ENCODE measurements at regions of chr15 and their contacts with region 1.

Region 1: GRCh38 chr15:85044251-85044853 is 62.7 kb downstream of the PDE8A start:
- DNase-seq: peak; percentile 32 to 93 (median 79)

Region 2: GRCh38 chr15:84748274-84749110 is 295.9 kb before region 1 on chr15 and contains the start of gene ZNF592:
- intact Hi-C with region 1: no loop called
- DNase-seq: peak in 41 of 42 donors; percentile 8 to 92 (median 80)

Region 3: DNA sequence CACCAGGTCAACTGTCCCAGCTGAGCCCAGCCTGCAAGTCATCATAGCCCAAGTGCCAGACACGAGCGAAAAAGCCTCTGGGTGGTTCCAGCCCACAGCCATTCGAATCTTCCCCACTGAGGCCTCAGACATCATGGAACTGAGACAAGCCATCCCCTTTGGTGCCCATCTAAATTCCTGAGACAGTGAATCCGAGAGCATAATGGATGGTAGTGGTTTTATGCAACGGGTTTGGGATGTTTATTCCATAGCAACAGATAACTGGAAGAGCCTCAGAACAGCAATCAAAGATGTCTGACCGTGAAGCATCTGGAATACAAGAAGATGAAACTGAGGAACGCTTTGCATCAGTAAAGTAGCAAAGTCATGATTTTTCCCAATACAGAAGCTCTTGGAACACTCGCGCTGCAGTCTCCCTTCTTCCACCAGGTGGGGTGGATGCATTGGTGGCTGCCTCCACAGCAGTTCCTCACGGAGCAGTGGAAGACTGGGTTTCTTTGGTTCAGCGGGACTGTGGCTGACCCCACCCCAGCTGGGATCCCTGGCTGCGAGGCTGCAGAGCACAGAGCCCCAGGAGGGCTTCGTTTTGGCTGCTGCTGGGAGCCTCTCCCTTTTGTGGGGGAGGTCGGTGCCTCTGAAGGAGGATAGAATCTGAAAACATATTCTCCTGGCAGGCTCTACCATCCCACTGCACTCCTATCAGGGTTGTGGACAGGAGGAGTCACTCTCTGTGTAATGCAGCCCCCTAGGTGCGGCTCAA is 89.1 kb before region 1 on chr15:
- intact Hi-C with region 1: loop called (anchors 10 kb)
- DNase-seq: peak; percentile 65 to 94 (median 86)

Region 4: GRCh38 chr15:84981054-84981710 is 63.2 kb before region 1 on chr15:
- intact Hi-C with region 1: loop called (anchors 5 kb)
- DNase-seq: peak; percentile 80 to 97 (median 94)

Region 5: DNA sequence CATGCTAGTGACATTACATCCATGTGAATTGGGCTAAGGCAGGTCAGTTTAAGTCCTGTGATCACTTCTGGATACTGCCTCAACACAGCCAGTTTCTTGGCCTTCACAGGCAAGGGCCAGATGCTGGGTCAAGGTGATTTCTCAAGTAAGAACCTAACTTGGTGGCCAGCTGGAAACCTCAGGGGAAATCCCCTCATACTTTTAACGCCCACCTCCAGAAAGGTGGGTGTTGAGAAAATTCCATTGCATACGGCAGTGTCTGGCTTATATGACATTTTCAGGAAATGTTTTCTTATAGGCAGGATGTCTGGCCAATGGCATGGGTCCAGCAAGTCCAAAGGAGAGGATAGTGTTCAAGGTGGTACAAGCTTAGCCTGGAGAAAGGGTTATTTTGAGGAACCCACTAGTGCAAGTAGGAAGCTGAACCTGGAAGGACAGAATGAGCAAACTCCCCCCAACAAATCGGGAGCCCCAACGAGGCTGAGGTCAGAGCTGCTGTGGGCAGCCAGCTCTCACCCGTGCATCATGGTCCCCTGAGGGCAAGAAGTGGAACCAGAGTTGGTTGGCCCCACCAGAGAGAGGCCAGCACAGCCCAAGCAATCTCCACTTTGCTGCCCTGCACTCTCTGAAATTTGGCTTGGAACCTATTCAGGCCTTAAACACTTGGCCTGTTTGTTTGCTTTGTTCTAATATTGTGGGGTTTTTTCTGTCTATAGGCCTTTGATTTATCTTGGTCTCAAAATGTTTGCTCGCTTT is 72.8 kb after region 1 on chr15:
- intact Hi-C with region 1: loop called (anchors 10 kb)
- DNase-seq: peak in 2 of 42 donors; percentile 5 to 43

Region 6: GRCh38 chr15:85128621-85129020 is 84.3 kb after region 1 on chr15:
- intact Hi-C with region 1: no loop called
- DNase-seq: no peak

Region 7: GRCh38 chr15:85306946-85307708 is 262.8 kb after region 1 on chr15:
- intact Hi-C with region 1: no loop called
- DNase-seq: no peak